ENCODE measurements at regions of chr20 and their contacts with region 1.

Region 1: GRCh38 chr20:57089691-57090150 is 176.7 kb downstream of the BMP7 start:
- DNase-seq: peak; percentile 70
- H3K4me3 ChIP-seq: no peak overlapping the region
- H3K27ac ChIP-seq: no peak overlapping the region
- H3K4me1 ChIP-seq: no peaks in the 10 kb centered on the region
- H3K27me3 ChIP-seq: peaks cover 16% of the 10 kb centered on the region
- CTCF ChIP-seq: peak; percentile 86

Region 2: GRCh38 chr20:56949318-56949717 is 140.4 kb before region 1 on chr20:
- CTCF ChIA-PET with region 1: no interaction called
- POLR2A ChIA-PET with region 1: no interaction called
- intact Hi-C with region 1: no loop called
- DNase-seq: no peak
- H3K4me3 ChIP-seq: no peak overlapping the region
- H3K27ac ChIP-seq: no peak overlapping the region
- H3K4me1 ChIP-seq: no peaks in the 10 kb centered on the region
- H3K27me3 ChIP-seq: peaks cover 68% of the 10 kb centered on the region
- CTCF ChIP-seq: no peak

Region 3: GRCh38 chr20:57351042-57351783 is 261.5 kb after region 1 on chr20 and contains the start of gene RAE1:
- CTCF ChIA-PET with region 1: interaction called, 10 read pairs
- POLR2A ChIA-PET with region 1: no interaction called
- intact Hi-C with region 1: loop called (anchors 1 kb)
- DNase-seq: peak; percentile 96
- H3K4me3 ChIP-seq: peak within 1 kb of the TSS; percentile 84
- H3K27ac ChIP-seq: peak within 1 kb of the TSS; percentile 93
- H3K4me1 ChIP-seq: no peaks in the 10 kb centered on the region
- H3K27me3 ChIP-seq: no peaks in the 10 kb centered on the region
- CTCF ChIP-seq: no peak
- total RNA-seq, gene RAE1: 59.4 and 70.9 TPM in 2 replicates

Measured in A673 (cell line).